ENCODE measurements at regions of chr14 and their contacts with region 1.

Region 1: GRCh38 chr14:103104654-103105452 is 10.3 kb downstream of the EXOC3L4 start:
- DNase-seq: no peak
- H3K4me3 ChIP-seq: no peak overlapping the region
- H3K27ac ChIP-seq: no peak overlapping the region
- H3K4me1 ChIP-seq: peaks cover 3% of the 10 kb centered on the region
- H3K27me3 ChIP-seq: peaks cover 28 to 29% of the 10 kb centered on the region in 2 experiments
- CTCF ChIP-seq: peak; percentile 99
- POLR2A ChIP-seq: no peak

Region 2: GRCh38 chr14:103091041-103091882 is 13.6 kb before region 1 on chr14:
- CTCF ChIA-PET with region 1: interaction called, 67 read pairs
- POLR2A ChIA-PET with region 1: no interaction called
- dilution Hi-C with region 1: no loop called
- intact Hi-C with region 1: no loop called
- DNase-seq: no peak
- H3K4me3 ChIP-seq: peak overlapping the region in 2 of 3 experiments; percentile 22 to 24
- H3K27ac ChIP-seq: no peak overlapping the region
- H3K4me1 ChIP-seq: peaks cover 4% of the 10 kb centered on the region
- H3K27me3 ChIP-seq: no peaks in the 10 kb centered on the region
- CTCF ChIP-seq: peak; percentile 30 to 64
- POLR2A ChIP-seq: no peak

Region 3: GRCh38 chr14:103151258-103151945 is 46.5 kb after region 1 on chr14:
- CTCF ChIA-PET with region 1: interaction called, 12 read pairs
- POLR2A ChIA-PET with region 1: no interaction called
- dilution Hi-C with region 1: no loop called
- intact Hi-C with region 1: no loop called
- DNase-seq: no peak
- H3K4me3 ChIP-seq: no peak overlapping the region
- H3K27ac ChIP-seq: no peak overlapping the region
- H3K4me1 ChIP-seq: no peaks in the 10 kb centered on the region
- H3K27me3 ChIP-seq: peaks cover 2 to 7% of the 10 kb centered on the region in 2 experiments
- CTCF ChIP-seq: no peak
- POLR2A ChIP-seq: no peak

Region 4: DNA sequence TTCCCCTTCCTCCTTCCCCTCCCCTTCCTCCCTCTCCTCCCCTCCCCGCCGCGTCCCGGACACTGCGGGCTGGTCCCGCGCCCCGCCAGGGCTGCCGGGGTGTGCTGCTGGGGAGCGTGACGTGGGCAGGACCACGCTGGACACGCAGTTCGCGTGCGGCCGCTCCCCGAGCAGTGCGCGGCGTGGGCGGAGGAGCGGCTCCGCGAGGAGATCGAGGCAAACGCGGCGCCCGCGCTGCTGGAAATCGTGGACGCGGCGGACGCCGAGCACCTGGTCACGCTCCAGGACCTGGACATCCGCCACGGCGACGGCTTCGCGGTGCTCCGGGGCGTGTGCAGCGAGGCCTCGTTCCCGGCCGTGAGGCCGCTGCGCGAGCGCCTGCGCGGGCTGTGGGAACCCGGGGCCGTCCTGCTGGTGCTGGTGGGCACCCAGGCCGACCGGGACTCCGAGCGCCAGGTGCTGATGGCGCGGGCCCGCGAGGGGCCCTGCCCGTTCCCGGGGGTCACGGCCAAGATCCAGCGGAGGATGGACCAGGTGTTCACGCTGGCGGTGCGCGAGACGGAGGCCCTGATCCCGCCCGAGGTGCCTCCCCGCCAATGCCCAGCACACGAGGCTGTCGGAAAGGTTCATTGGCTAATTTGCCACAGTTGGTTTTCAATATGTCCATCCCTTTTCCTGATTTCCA is 102.7 kb after region 1 on chr14:
- CTCF ChIA-PET with region 1: interaction called, 12 read pairs
- POLR2A ChIA-PET with region 1: no interaction called
- dilution Hi-C with region 1: no loop called
- intact Hi-C with region 1: no loop called
- DNase-seq: no peak
- H3K4me3 ChIP-seq: peak overlapping the region in 1 of 3 experiments; percentile 39
- H3K27ac ChIP-seq: no peak overlapping the region
- H3K4me1 ChIP-seq: no peaks in the 10 kb centered on the region
- H3K27me3 ChIP-seq: peaks cover 16 to 31% of the 10 kb centered on the region in 2 experiments
- CTCF ChIP-seq: no peak
- POLR2A ChIP-seq: no peak

Region 5: GRCh38 chr14:103281496-103282231 is 176.8 kb after region 1 on chr14:
- CTCF ChIA-PET with region 1: interaction called, 257 read pairs
- POLR2A ChIA-PET with region 1: no interaction called
- dilution Hi-C with region 1: no loop called
- intact Hi-C with region 1: no loop called
- DNase-seq: peak; percentile 27
- H3K4me3 ChIP-seq: no peak overlapping the region
- H3K27ac ChIP-seq: no peak overlapping the region
- H3K4me1 ChIP-seq: no peaks in the 10 kb centered on the region
- H3K27me3 ChIP-seq: peaks cover 31 to 51% of the 10 kb centered on the region in 2 experiments
- CTCF ChIP-seq: peak; percentile 5 to 48
- POLR2A ChIP-seq: no peak

Region 6: DNA sequence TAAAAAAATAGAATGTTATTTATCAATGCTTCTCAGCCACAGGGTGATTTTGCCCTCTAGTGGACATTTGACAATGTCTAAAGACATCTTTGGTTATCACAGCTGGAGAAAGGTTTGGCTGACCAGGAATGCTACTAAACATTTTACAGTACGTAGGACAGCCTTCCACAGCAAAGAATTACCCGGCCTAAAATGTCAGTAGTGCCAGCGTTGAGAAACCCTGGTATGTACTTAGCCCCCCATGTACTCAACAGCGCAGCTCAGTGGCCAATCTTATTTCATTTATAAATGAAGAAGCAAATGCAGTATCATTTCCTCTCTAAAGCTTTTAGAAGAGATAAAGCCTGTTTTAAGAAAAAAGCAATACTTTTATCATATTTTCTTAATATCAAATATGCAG is 286.2 kb after region 1 on chr14:
- CTCF ChIA-PET with region 1: interaction called, 11 read pairs
- POLR2A ChIA-PET with region 1: no interaction called
- dilution Hi-C with region 1: no loop called
- intact Hi-C with region 1: loop called (anchors 5 kb)
- DNase-seq: peak; percentile 80
- H3K4me3 ChIP-seq: no peak overlapping the region
- H3K27ac ChIP-seq: no peak overlapping the region
- H3K4me1 ChIP-seq: peaks cover 37% of the 10 kb centered on the region
- H3K27me3 ChIP-seq: no peaks in the 10 kb centered on the region
- CTCF ChIP-seq: peak; percentile 49 to 64
- POLR2A ChIP-seq: no peak

Measured in endothelial cell of umbilical vein (primary cell).